ENCODE measurements at regions of chr17 and their contacts with region 1.

Region 1: DNA sequence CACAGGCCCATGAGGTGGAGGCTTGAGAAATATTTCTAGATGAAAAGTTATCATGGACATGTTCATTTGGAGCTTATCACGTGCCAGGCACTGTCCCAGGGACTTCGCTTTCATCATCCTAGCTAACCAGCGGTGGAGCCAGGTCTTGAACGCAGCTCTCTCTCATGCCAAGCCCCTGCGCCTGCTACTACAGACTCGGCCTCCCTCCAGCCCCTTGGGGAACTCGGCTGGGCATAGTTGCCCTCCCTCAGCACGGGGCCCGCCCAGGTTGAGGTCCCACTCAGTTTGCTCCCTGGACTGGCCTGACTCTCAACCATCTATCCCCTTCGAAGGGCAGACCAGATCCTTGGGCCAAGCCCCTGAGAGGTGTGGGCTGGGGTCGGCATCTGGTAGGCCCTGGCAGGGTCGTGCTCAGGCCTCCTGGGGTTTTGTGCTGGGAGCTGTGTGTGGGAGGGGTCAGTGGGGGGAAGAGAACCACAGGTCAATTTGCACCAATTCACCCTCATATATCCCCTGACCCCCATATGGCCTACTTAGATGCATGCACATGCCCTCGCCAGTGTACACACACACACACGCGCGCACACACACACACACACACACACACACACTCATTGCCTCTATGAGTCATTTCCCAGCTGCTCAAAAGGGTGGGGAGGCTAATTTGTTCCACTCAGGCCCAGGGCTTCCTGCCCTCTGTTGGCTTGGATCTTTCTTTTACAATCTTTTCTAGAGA is 12.1 kb upstream of the SCN4A start:
- DNase-seq: peak in 5 of 9 donors; percentile 18 to 62 (median 34)
- ATAC-seq: peak; percentile 92
- H3K4me3 ChIP-seq: no peak overlapping the region
- H3K4me3 Mint-ChIP-seq: peak overlapping the region in 1 of 10 donors; percentile 62
- H3K27ac ChIP-seq: no peak overlapping the region
- H3K27ac Mint-ChIP-seq: peak overlapping the region in 7 of 9 donors; percentile 28 to 85 (median 69)
- H3K4me1 ChIP-seq: peaks cover 4 to 9% of the 10 kb centered on the region in 2 donors
- H3K4me1 Mint-ChIP-seq: peaks cover 8 to 24% (median 15%) of the 10 kb centered on the region in 7 donors
- H3K27me3 ChIP-seq: no peaks in the 10 kb centered on the region
- H3K27me3 Mint-ChIP-seq: no peaks in the 10 kb centered on the region

Region 2: DNA sequence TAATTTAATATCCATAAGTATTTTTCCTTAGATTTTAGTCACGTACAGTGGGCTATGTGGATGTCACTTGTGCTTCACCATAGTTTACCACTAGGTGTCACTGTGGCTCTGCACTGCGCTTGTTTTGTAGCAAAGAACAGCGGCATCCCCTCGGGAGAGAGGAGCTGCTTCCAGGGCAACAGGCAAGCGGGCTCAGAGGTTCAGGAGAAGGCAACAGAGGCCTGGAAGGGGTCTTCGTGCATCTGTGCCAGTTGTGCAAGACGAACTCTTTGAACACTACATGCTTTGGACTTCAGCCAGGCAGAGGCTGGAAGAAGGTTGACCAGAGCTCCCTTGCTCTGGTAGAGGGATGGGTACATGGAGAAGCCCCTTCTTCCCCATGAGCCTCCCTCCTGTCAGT is 559.3 kb before region 1 on chr17:
- CTCF ChIA-PET with region 1: no interaction called
- POLR2A ChIA-PET with region 1: no interaction called
- intact Hi-C with region 1: no loop called
- DNase-seq: peak; percentile 31 to 74 (median 62)
- ATAC-seq: peak; percentile 91
- H3K4me3 ChIP-seq: no peak overlapping the region
- H3K4me3 Mint-ChIP-seq: peak overlapping the region in 4 of 10 donors; percentile 19 to 67 (median 32)
- H3K27ac ChIP-seq: no peak overlapping the region
- H3K27ac Mint-ChIP-seq: peak overlapping the region in 1 of 9 donors; percentile 41
- H3K4me1 ChIP-seq: peaks cover 22 to 26% of the 10 kb centered on the region in 2 donors
- H3K4me1 Mint-ChIP-seq: peaks cover 20 to 39% (median 28%) of the 10 kb centered on the region in 7 donors
- H3K27me3 ChIP-seq: no peaks in the 10 kb centered on the region
- H3K27me3 Mint-ChIP-seq: peaks cover 0 to 22% (median 0%) of the 10 kb centered on the region in 5 donors

Region 3: GRCh38 chr17:63911657-63912426 is 73.0 kb before region 1 on chr17:
- CTCF ChIA-PET with region 1: interaction called, 4 read pairs
- POLR2A ChIA-PET with region 1: no interaction called
- intact Hi-C with region 1: loop called in 1 of 2 experiments (anchors 2 kb)
- DNase-seq: peak; percentile 30 to 64 (median 49)
- ATAC-seq: peak; percentile 88
- H3K4me3 ChIP-seq: no peak overlapping the region
- H3K4me3 Mint-ChIP-seq: peak overlapping the region in 1 of 10 donors; percentile 25
- H3K27ac ChIP-seq: no peak overlapping the region
- H3K27ac Mint-ChIP-seq: peak overlapping the region in 1 of 9 donors; percentile 78
- H3K4me1 ChIP-seq: no peaks in the 10 kb centered on the region
- H3K4me1 Mint-ChIP-seq: peaks cover 0 to 10% (median 0%) of the 10 kb centered on the region in 7 donors
- H3K27me3 ChIP-seq: no peaks in the 10 kb centered on the region
- H3K27me3 Mint-ChIP-seq: peaks cover 0 to 28% (median 0%) of the 10 kb centered on the region in 5 donors

Region 4: DNA sequence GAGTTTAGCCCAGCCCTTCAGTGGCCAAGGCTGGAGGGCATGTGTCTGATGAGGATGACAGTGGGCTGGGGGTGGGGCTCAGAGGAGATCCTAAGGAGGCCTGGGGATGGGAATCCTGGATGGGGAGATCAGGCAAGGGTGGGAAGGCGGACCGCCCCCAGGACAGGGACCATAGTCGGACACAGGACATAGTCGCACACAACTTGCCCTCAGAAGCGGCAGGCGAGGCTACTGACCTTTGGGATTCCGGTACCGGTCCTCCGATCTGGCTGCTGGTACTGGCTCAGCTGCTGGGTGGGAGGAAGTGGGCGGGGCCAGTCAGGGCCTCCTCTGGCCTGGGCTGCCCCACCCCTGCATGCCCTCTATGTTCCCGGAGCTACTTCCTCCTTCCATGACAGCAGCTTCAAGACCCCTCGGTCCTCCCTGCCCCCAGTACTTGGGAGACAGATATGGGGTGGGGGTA is 53.7 kb before region 1 on chr17:
- CTCF ChIA-PET with region 1: interaction called, 14 read pairs
- POLR2A ChIA-PET with region 1: no interaction called
- intact Hi-C with region 1: loop called (anchors 5 kb)
- DNase-seq: peak; percentile 29 to 56 (median 48)
- ATAC-seq: peak; percentile 82
- H3K4me3 ChIP-seq: peak overlapping the region; percentile 85
- H3K4me3 Mint-ChIP-seq: peak overlapping the region; percentile 88 to 99 (median 96)
- H3K27ac ChIP-seq: peak overlapping the region; percentile 84
- H3K27ac Mint-ChIP-seq: peak overlapping the region; percentile 87 to 96 (median 93)
- H3K4me1 ChIP-seq: peaks cover 13 to 21% of the 10 kb centered on the region in 2 donors
- H3K4me1 Mint-ChIP-seq: peaks cover 11 to 28% (median 24%) of the 10 kb centered on the region in 7 donors
- H3K27me3 ChIP-seq: no peaks in the 10 kb centered on the region
- H3K27me3 Mint-ChIP-seq: peaks cover 0 to 5% (median 0%) of the 10 kb centered on the region in 5 donors

Region 5: GRCh38 chr17:63946440-63947367 is 38.1 kb before region 1 on chr17:
- CTCF ChIA-PET with region 1: interaction called, 13 read pairs
- POLR2A ChIA-PET with region 1: no interaction called
- intact Hi-C with region 1: loop called (anchors 2 kb)
- DNase-seq: peak; percentile 32 to 71 (median 53)
- ATAC-seq: peak; percentile 87
- H3K4me3 ChIP-seq: peak overlapping the region; percentile 44
- H3K4me3 Mint-ChIP-seq: peak overlapping the region; percentile 59 to 86 (median 73)
- H3K27ac ChIP-seq: no peak overlapping the region
- H3K27ac Mint-ChIP-seq: peak overlapping the region in 5 of 9 donors; percentile 25 to 85 (median 39)
- H3K4me1 ChIP-seq: peaks cover 14 to 17% of the 10 kb centered on the region in 2 donors
- H3K4me1 Mint-ChIP-seq: peaks cover 9 to 19% (median 12%) of the 10 kb centered on the region in 7 donors
- H3K27me3 ChIP-seq: no peaks in the 10 kb centered on the region
- H3K27me3 Mint-ChIP-seq: peaks cover 0 to 7% (median 0%) of the 10 kb centered on the region in 5 donors

Region 6: GRCh38 chr17:63974594-63975192 is 10.1 kb before region 1 on chr17:
- CTCF ChIA-PET with region 1: interaction called, 11 read pairs
- POLR2A ChIA-PET with region 1: no interaction called
- intact Hi-C with region 1: no loop called
- DNase-seq: no peak
- ATAC-seq: no peak
- H3K4me3 ChIP-seq: no peak overlapping the region
- H3K4me3 Mint-ChIP-seq: peak overlapping the region in 1 of 10 donors; percentile 56
- H3K27ac ChIP-seq: no peak overlapping the region
- H3K27ac Mint-ChIP-seq: peak overlapping the region in 1 of 9 donors; percentile 25
- H3K4me1 ChIP-seq: no peaks in the 10 kb centered on the region
- H3K4me1 Mint-ChIP-seq: peaks cover 0 to 17% (median 5%) of the 10 kb centered on the region in 7 donors
- H3K27me3 ChIP-seq: no peaks in the 10 kb centered on the region
- H3K27me3 Mint-ChIP-seq: peaks cover 0 to 23% (median 0%) of the 10 kb centered on the region in 5 donors

Measured in naive thymus-derived CD4-positive, alpha-beta T cell (primary cell).